SK-N-SH (cell line): ENCODE measurements at regions of chr13 and their contacts with region 1.

Region 1: GRCh38 chr13:98445340-98446233 is 131.3 kb downstream of the STK24 start:
- DNase-seq: peak; percentile 92
- H3K4me3 ChIP-seq: no peak overlapping the region; a peak in 1 of 4 replicates
- H3K27ac ChIP-seq: no peak overlapping the region; a peak in 1 of 4 replicates
- H3K4me1 ChIP-seq: peaks cover 3 to 11% of the 10 kb centered on the region in 2 experiments; a peak in 2 of 4 replicates
- H3K27me3 ChIP-seq: no peaks in the 10 kb centered on the region
- CTCF ChIP-seq: peak; percentile 87
- EP300 ChIP-seq: no peak
- RAD21 ChIP-seq: peak; percentile 89

Region 2: GRCh38 chr13:97855570-97856303 is 589.9 kb before region 1 on chr13:
- CTCF ChIA-PET with region 1: interaction called, 23 read pairs
- POLR2A ChIA-PET with region 1: no interaction called
- DNase-seq: peak; percentile 62
- H3K4me3 ChIP-seq: no peak overlapping the region
- H3K27ac ChIP-seq: peak overlapping the region in 1 of 2 experiments; percentile 30; a peak in 1 of 4 replicates
- H3K4me1 ChIP-seq: peaks cover 3 to 17% of the 10 kb centered on the region in 2 experiments; a peak in 2 of 4 replicates
- H3K27me3 ChIP-seq: no peaks in the 10 kb centered on the region
- CTCF ChIP-seq: peak; percentile 92
- EP300 ChIP-seq: 0 out of 4 replicates have a peak, but pooled peaks of 1 of the 2 experiments have one; percentile 9
- RAD21 ChIP-seq: peak; percentile 98

Region 3: DNA sequence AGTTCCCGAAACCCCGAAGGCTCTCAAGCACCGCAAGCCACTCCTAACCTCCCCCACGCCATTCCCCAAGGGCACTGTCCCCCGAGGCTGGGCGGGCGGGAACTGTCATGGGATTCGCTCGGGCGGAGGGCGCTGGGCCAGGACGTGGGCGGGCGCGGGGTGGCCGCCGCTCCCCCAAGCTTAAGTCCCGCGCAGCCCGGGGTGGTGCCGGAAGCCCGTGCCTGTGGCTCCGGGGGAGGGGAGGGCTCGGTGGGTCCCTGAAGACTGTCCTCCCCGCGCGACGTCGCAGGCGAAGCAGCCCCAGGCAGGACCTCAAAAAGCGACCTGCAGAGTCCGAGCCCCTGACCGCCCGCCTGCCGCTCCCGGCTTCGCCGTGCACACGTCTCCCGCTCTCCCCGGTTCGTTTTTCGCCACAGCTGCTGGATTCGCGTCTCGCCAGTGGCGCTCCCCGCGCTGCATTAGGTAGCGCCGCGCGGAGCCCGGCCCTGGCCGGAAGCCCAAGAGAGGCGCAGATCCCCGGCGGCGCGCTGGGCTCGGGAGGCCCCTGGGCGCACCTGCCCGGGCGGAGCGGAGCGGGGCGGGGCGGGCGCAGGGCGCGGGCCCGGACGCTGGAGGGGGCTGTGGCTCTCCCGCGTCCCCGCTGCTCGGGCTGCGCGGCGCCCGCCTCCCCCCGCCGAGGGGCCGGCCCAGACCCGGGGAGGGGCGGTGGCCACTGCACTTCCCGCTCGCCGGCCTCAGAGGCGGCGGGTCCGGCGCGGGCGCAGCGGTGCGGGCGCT is 303.0 kb before region 1 on chr13 and contains the start of gene FARP1:
- CTCF ChIA-PET with region 1: interaction called, 10 read pairs
- POLR2A ChIA-PET with region 1: no interaction called
- DNase-seq: peak; percentile 95
- H3K4me3 ChIP-seq: peak within 1 kb of the TSS; percentile 79 to 81
- H3K27ac ChIP-seq: peak within 1 kb of the TSS; percentile 53 to 60; a peak in 3 of 4 replicates
- H3K4me1 ChIP-seq: peaks cover 24 to 28% of the 10 kb centered on the region in 2 experiments
- H3K27me3 ChIP-seq: no peaks in the 10 kb centered on the region
- CTCF ChIP-seq: no peak; the same call in 1 of the 2 replicates
- EP300 ChIP-seq: no peak
- RAD21 ChIP-seq: peak; percentile 59
- polyA plus RNA-seq, gene FARP1: 10.6 and 12.0 TPM in 2 replicates

Region 4: GRCh38 chr13:98267080-98267912 is 178.3 kb before region 1 on chr13:
- CTCF ChIA-PET with region 1: no interaction called
- POLR2A ChIA-PET with region 1: no interaction called
- DNase-seq: no peak
- H3K4me3 ChIP-seq: no peak overlapping the region
- H3K27ac ChIP-seq: no peak overlapping the region
- H3K4me1 ChIP-seq: no peaks in the 10 kb centered on the region; a peak in 1 of 4 replicates
- H3K27me3 ChIP-seq: no peaks in the 10 kb centered on the region
- CTCF ChIP-seq: no peak
- EP300 ChIP-seq: no peak
- RAD21 ChIP-seq: no peak

Region 5: DNA sequence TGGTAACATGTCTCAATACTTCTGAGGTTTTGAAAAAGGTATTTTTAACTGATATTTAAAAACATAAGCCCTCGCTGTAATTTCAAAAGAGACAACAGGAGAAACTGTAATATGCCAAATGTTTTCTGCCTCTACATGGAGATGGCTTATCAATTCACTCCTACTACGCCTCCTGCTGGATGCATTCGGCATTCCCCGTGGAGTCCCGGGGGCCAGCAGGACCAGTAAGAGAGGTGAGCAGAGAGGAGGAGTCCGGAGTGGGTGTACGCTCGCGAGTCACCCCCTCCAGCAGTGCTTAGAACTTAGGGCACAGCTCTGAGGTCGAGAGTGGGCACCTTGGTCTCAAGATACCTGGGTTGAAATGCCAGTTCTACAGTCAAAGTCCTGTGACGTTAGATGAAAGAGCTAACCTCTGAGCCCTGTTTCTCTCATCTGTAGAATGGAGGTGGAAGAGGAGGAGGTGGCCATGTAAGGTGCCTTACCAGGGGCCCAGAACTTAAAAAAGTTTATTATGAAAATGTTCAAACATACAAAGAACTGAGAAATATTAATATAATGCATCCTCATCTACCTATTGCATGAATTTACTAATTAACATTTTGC is 21.1 kb after region 1 on chr13:
- CTCF ChIA-PET with region 1: interaction called, 27 read pairs
- POLR2A ChIA-PET with region 1: no interaction called
- DNase-seq: peak; percentile 68
- H3K4me3 ChIP-seq: peak overlapping the region in 1 of 2 experiments; percentile 28; a peak in 1 of 4 replicates
- H3K27ac ChIP-seq: no peak overlapping the region
- H3K4me1 ChIP-seq: peaks cover 0 to 19% of the 10 kb centered on the region in 2 experiments; a peak in 1 of 4 replicates
- H3K27me3 ChIP-seq: no peaks in the 10 kb centered on the region
- CTCF ChIP-seq: peak; percentile 75
- EP300 ChIP-seq: no peak
- RAD21 ChIP-seq: peak; percentile 50

Region 6: GRCh38 chr13:98653463-98653985 is 207.9 kb after region 1 on chr13:
- CTCF ChIA-PET with region 1: interaction called, 164 read pairs
- POLR2A ChIA-PET with region 1: interaction called, 3 read pairs
- DNase-seq: peak; percentile 84
- H3K4me3 ChIP-seq: peak overlapping the region in 1 of 2 experiments; percentile 35; a peak in 1 of 4 replicates
- H3K27ac ChIP-seq: no peak overlapping the region
- H3K4me1 ChIP-seq: peaks cover 0 to 7% of the 10 kb centered on the region in 2 experiments; a peak in 2 of 4 replicates
- H3K27me3 ChIP-seq: no peaks in the 10 kb centered on the region
- CTCF ChIP-seq: peak; percentile 92
- EP300 ChIP-seq: 0 out of 4 replicates have a peak, but pooled peaks of 1 of the 2 experiments have one; percentile 31
- RAD21 ChIP-seq: peak; percentile 92

Region 7: GRCh38 chr13:98672944-98673545 is 227.5 kb after region 1 on chr13:
- CTCF ChIA-PET with region 1: interaction called, 89 read pairs
- POLR2A ChIA-PET with region 1: no interaction called
- DNase-seq: peak; percentile 77
- H3K4me3 ChIP-seq: peak overlapping the region in 1 of 2 experiments; percentile 22; a peak in 1 of 4 replicates
- H3K27ac ChIP-seq: no peak overlapping the region
- H3K4me1 ChIP-seq: peaks cover 0 to 8% of the 10 kb centered on the region in 2 experiments; a peak in 1 of 4 replicates
- H3K27me3 ChIP-seq: no peaks in the 10 kb centered on the region; the same call in 1 of the 2 replicates
- CTCF ChIP-seq: peak; percentile 89
- EP300 ChIP-seq: no peak
- RAD21 ChIP-seq: peak; percentile 85

Region 8: GRCh38 chr13:100039740-100040139 is 1594.2 kb after region 1 on chr13:
- CTCF ChIA-PET with region 1: no interaction called
- POLR2A ChIA-PET with region 1: no interaction called
- DNase-seq: no peak
- H3K4me3 ChIP-seq: no peak overlapping the region
- H3K27ac ChIP-seq: no peak overlapping the region
- H3K4me1 ChIP-seq: no peaks in the 10 kb centered on the region; a peak in 1 of 4 replicates
- H3K27me3 ChIP-seq: no peaks in the 10 kb centered on the region
- CTCF ChIP-seq: no peak
- EP300 ChIP-seq: no peak
- RAD21 ChIP-seq: no peak